H1 (cell line): ENCODE measurements at regions of chr3 and their contacts with region 1.

Region 1: DNA sequence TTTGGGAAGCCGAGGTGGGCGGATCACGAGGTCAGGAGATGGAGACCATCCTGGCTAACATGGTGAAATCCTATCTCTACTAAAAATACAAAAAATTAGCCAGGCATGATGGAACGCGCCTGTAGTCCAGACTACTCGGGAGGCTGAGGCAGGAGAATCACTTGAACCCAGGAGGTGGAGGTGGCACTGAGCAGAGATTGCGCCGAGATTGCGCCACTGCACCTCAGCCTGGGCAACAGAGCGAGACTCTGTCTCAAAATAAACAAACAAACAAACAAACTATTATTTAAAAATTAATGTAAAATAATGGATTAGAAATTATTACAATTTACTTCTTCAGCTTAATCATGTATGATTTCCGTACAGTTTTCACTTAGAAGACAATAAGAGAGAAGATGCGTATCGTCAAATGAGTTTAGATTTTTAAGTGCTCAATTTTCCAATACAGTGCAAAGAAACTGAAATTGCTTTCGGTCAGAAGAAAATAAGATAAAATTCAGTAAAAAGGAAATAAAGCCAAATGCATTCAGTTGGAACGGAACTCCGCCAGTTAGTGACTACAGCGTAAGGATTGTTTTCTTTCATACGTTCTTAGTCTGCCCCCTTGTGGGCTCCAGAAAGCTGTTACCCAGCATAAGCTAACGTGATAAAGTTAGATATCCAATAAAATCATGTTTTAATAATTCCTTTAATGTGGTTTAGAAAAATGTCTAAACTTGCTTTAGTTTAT is 24.8 kb downstream of the AADAC start:
- DNase-seq: no peak
- H3K4me3 ChIP-seq: no peak overlapping the region
- H3K27ac ChIP-seq: no peak overlapping the region
- H3K4me1 ChIP-seq: 0 out of 7 replicates have a peak, but pooled peaks cover 0 to 3% (median 0%) of the 10 kb centered on the region in 4 experiments
- H3K27me3 ChIP-seq: peaks cover 0 to 1% (median 0%) of the 10 kb centered on the region in 4 experiments; a peak in 1 of 7 replicates
- CTCF ChIP-seq: peak in 2 of 3 experiments; percentile 71 to 74; a peak in 3 of 4 replicates
- EP300 ChIP-seq: no peak
- POLR2A ChIP-seq: no peak
- RAD21 ChIP-seq: peak; percentile 90 to 91

Region 2: GRCh38 chr3:151425627-151426335 is 413.0 kb before region 1 on chr3:
- CTCF ChIA-PET with region 1: interaction called, 19 read pairs
- POLR2A ChIA-PET with region 1: no interaction called
- DNase-seq: no peak
- H3K4me3 ChIP-seq: no peak overlapping the region
- H3K27ac ChIP-seq: no peak overlapping the region
- H3K4me1 ChIP-seq: peaks cover 0 to 11% (median 7%) of the 10 kb centered on the region in 4 experiments; a peak in 4 of 7 replicates
- H3K27me3 ChIP-seq: no peaks in the 10 kb centered on the region
- CTCF ChIP-seq: no peak; a peak in 1 of 4 replicates
- EP300 ChIP-seq: no peak
- POLR2A ChIP-seq: no peak
- RAD21 ChIP-seq: no peak

Region 3: DNA sequence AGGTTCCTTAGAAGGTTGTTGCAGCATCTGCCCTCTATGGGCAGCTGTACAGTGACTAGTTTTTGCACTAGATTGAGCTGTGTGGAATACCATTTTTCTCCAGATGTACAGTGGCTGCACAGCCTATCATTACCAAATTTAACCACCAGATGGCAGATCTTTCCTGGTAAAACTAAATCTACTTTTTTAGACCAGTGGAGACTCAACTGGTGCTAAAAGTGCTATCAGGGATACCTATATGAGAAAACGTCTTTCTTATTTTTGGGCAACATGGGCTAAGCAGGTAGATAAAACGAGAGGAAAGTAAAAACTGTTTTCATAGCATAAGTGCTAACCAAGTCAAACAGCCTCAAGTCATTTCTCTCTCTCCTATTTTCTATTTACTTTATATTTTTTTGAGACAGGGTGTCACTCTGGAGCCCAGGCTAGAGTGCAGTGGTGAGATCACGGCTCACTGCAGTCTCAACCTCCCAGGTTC is 399.1 kb before region 1 on chr3:
- CTCF ChIA-PET with region 1: interaction called, 82 read pairs
- POLR2A ChIA-PET with region 1: no interaction called
- DNase-seq: no peak
- H3K4me3 ChIP-seq: no peak overlapping the region
- H3K27ac ChIP-seq: no peak overlapping the region
- H3K4me1 ChIP-seq: peaks cover 0 to 4% (median 0%) of the 10 kb centered on the region in 4 experiments; a peak in 1 of 7 replicates
- H3K27me3 ChIP-seq: no peaks in the 10 kb centered on the region
- CTCF ChIP-seq: peak in 2 of 3 experiments; percentile 58 to 66; a peak in 3 of 4 replicates
- EP300 ChIP-seq: no peak
- POLR2A ChIP-seq: no peak
- RAD21 ChIP-seq: peak; percentile 82 to 83

Region 4: GRCh38 chr3:151460774-151461450 is 377.8 kb before region 1 on chr3 and contains the start of gene IGSF10:
- CTCF ChIA-PET with region 1: interaction called, 39 read pairs
- POLR2A ChIA-PET with region 1: no interaction called
- DNase-seq: peak in 1 of 2 experiments; percentile 69
- H3K4me3 ChIP-seq: peak within 1 kb of the TSS; percentile 16 to 66 (median 46)
- H3K27ac ChIP-seq: no peak within 1 kb of the TSS
- H3K4me1 ChIP-seq: peaks cover 0 to 2% (median 0%) of the 10 kb centered on the region in 4 experiments; a peak in 1 of 7 replicates
- H3K27me3 ChIP-seq: no peaks in the 10 kb centered on the region
- CTCF ChIP-seq: no peak
- EP300 ChIP-seq: no peak
- POLR2A ChIP-seq: no peak
- RAD21 ChIP-seq: no peak
- total RNA-seq, gene IGSF10: 0.86 and 0.95 TPM in 2 replicates

Region 5: GRCh38 chr3:151468284-151468917 is 370.3 kb before region 1 on chr3:
- CTCF ChIA-PET with region 1: interaction called, 39 read pairs
- POLR2A ChIA-PET with region 1: no interaction called
- DNase-seq: peak; percentile 36 to 58
- H3K4me3 ChIP-seq: no peak overlapping the region
- H3K27ac ChIP-seq: no peak overlapping the region
- H3K4me1 ChIP-seq: no peaks in the 10 kb centered on the region
- H3K27me3 ChIP-seq: no peaks in the 10 kb centered on the region
- CTCF ChIP-seq: peak; percentile 36 to 81 (median 68)
- EP300 ChIP-seq: no peak
- POLR2A ChIP-seq: no peak
- RAD21 ChIP-seq: peak; percentile 79 to 83

Region 6: GRCh38 chr3:151787626-151788025 is 51.1 kb before region 1 on chr3:
- CTCF ChIA-PET with region 1: no interaction called
- POLR2A ChIA-PET with region 1: no interaction called
- DNase-seq: no peak
- H3K4me3 ChIP-seq: no peak overlapping the region
- H3K27ac ChIP-seq: no peak overlapping the region
- H3K4me1 ChIP-seq: no peaks in the 10 kb centered on the region
- H3K27me3 ChIP-seq: no peaks in the 10 kb centered on the region
- CTCF ChIP-seq: no peak
- EP300 ChIP-seq: no peak
- POLR2A ChIP-seq: no peak
- RAD21 ChIP-seq: no peak

Region 7: DNA sequence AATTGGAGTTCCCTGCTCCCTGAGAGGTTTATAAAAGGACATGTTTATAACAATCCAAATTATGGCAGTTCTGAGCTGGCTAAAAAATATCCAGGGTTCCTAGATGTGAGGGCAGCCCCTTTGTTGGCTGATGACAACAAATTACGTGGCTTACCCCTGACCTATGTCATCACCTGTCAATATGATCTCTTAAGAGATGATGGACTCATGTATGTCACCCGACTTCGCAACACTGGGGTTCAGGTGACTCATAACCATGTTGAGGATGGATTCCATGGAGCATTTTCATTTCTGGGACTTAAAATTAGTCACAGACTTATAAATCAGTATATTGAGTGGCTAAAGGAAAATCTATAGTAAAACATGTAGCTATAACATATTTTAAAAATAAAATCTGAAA is 10.9 kb before region 1 on chr3:
- CTCF ChIA-PET with region 1: interaction called, 12 read pairs
- POLR2A ChIA-PET with region 1: no interaction called
- DNase-seq: no peak
- H3K4me3 ChIP-seq: no peak overlapping the region
- H3K27ac ChIP-seq: no peak overlapping the region
- H3K4me1 ChIP-seq: no peaks in the 10 kb centered on the region
- H3K27me3 ChIP-seq: no peaks in the 10 kb centered on the region
- CTCF ChIP-seq: no peak
- EP300 ChIP-seq: no peak
- POLR2A ChIP-seq: no peak
- RAD21 ChIP-seq: no peak

Region 8: GRCh38 chr3:151852074-151852811 is 13.5 kb after region 1 on chr3:
- CTCF ChIA-PET with region 1: no interaction called
- POLR2A ChIA-PET with region 1: no interaction called
- DNase-seq: no peak
- H3K4me3 ChIP-seq: no peak overlapping the region
- H3K27ac ChIP-seq: no peak overlapping the region
- H3K4me1 ChIP-seq: no peaks in the 10 kb centered on the region
- H3K27me3 ChIP-seq: no peaks in the 10 kb centered on the region
- CTCF ChIP-seq: no peak
- EP300 ChIP-seq: no peak
- POLR2A ChIP-seq: no peak
- RAD21 ChIP-seq: no peak

Region 9: GRCh38 chr3:151918253-151919029 is 79.7 kb after region 1 on chr3:
- CTCF ChIA-PET with region 1: interaction called, 12 read pairs
- POLR2A ChIA-PET with region 1: no interaction called
- DNase-seq: no peak
- H3K4me3 ChIP-seq: no peak overlapping the region
- H3K27ac ChIP-seq: no peak overlapping the region
- H3K4me1 ChIP-seq: no peaks in the 10 kb centered on the region
- H3K27me3 ChIP-seq: no peaks in the 10 kb centered on the region
- CTCF ChIP-seq: peak in 2 of 3 experiments; percentile 35 to 48; a peak in 2 of 4 replicates
- EP300 ChIP-seq: no peak
- POLR2A ChIP-seq: no peak
- RAD21 ChIP-seq: peak; percentile 69 to 76